ENCODE measurements at regions of chr18 and their contacts with region 1.

Region 1: DNA sequence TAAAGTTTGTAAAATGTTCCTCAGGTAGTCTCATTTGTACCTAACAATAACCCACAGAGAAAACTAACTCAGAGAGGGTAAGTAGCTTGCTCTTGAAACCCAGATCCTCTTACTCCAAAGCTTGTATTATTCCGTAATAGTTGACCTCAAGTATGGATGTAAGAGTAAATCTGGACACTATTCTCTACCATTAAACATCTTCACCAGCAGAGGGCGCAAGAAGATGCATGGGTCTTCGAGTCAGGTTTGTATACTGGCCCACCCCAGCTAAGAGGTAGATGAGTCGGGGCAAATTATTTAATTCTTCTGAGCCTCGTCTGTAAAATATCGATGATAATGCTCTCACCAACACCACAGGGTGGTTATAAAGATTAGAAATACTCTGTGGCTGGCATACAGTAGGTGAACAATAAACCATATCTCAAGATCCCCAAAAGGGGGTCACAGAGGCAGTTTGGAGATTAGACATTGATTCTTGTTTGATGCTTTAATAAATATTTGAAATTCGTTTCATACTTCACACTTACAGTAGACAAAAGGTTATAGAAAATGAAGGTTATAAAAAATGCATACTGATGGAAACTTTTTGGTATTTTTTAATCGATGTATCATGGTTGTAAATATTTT is 3.5 kb upstream of the CABLES1 start:
- DNase-seq: peak in 3 of 5 donors; percentile 67 to 94 (median 83)
- H3K4me3 ChIP-seq: no peak overlapping the region
- H3K27ac ChIP-seq: no peak overlapping the region
- H3K4me1 ChIP-seq: peaks cover 0 to 16% (median 10%) of the 10 kb centered on the region in 3 donors
- H3K27me3 ChIP-seq: no peaks in the 10 kb centered on the region
- CTCF ChIP-seq: peak; percentile 86

Region 2: GRCh38 chr18:23183411-23184155 is 51.8 kb after region 1 on chr18:
- intact Hi-C with region 1: no loop called
- DNase-seq: no peak
- H3K4me3 ChIP-seq: no peak overlapping the region
- H3K27ac ChIP-seq: no peak overlapping the region
- H3K4me1 ChIP-seq: peaks cover 0 to 9% (median 2%) of the 10 kb centered on the region in 3 donors
- H3K27me3 ChIP-seq: no peaks in the 10 kb centered on the region
- CTCF ChIP-seq: no peak

Region 3: GRCh38 chr18:23259701-23260582 is 128.1 kb after region 1 on chr18:
- intact Hi-C with region 1: loop called (anchors 10 kb)
- DNase-seq: peak; percentile 83 to 95 (median 90)
- H3K4me3 ChIP-seq: peak overlapping the region; percentile 22 to 32 (median 24)
- H3K27ac ChIP-seq: peak overlapping the region; percentile 85 to 88
- H3K4me1 ChIP-seq: peaks cover 0 to 36% (median 28%) of the 10 kb centered on the region in 3 donors
- H3K27me3 ChIP-seq: no peaks in the 10 kb centered on the region
- CTCF ChIP-seq: no peak

Measured in kidney (tissue), 22 donors.